Calu3 (cell line): ENCODE measurements at regions of chr2 and their contacts with region 1.

Region 1: GRCh38 chr2:83951378-83951947 is 507.6 kb downstream of the SUCLG1 start:
- DNase-seq: no peak
- H3K4me3 Mint-ChIP-seq: no peak overlapping the region
- H3K27ac Mint-ChIP-seq: peak overlapping the region; percentile 19
- H3K4me1 Mint-ChIP-seq: peaks cover 17% of the 10 kb centered on the region
- H3K27me3 Mint-ChIP-seq: no peaks in the 10 kb centered on the region
- CTCF ChIP-seq: no peak

Region 2: DNA sequence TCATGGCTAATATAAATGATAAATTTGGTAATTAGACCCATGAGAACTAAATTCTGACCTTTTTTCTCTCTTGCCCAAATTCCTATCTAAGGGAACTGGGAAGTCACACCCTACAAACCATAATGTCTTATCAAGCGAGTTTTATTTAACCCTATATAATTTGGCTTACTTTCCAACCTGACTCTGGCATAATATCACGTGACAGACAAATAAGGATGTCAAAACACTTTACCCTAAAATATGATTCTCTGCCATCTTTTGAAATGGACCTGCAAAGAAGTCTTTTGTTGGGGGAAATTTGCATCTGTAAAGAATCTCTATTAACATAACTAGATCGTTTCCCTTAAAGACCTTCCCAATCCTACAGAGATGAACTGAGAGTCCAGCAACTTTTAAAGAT is 1823.4 kb before region 1 on chr2:
- CTCF ChIA-PET with region 1: no interaction called
- intact Hi-C with region 1: no loop called
- DNase-seq: no peak
- H3K4me3 Mint-ChIP-seq: no peak overlapping the region
- H3K27ac Mint-ChIP-seq: no peak overlapping the region
- H3K4me1 Mint-ChIP-seq: peaks cover 8% of the 10 kb centered on the region
- H3K27me3 Mint-ChIP-seq: no peaks in the 10 kb centered on the region
- CTCF ChIP-seq: no peak

Region 3: GRCh38 chr2:83764447-83765005 is 186.9 kb before region 1 on chr2:
- CTCF ChIA-PET with region 1: no interaction called
- intact Hi-C with region 1: no loop called
- DNase-seq: no peak
- H3K4me3 Mint-ChIP-seq: no peak overlapping the region
- H3K27ac Mint-ChIP-seq: no peak overlapping the region
- H3K4me1 Mint-ChIP-seq: no peaks in the 10 kb centered on the region
- H3K27me3 Mint-ChIP-seq: no peaks in the 10 kb centered on the region
- CTCF ChIP-seq: no peak

Region 4: GRCh38 chr2:83900862-83901261 is 50.6 kb before region 1 on chr2:
- CTCF ChIA-PET with region 1: no interaction called
- intact Hi-C with region 1: loop called (anchors 2 kb)
- DNase-seq: peak; percentile 10
- H3K4me3 Mint-ChIP-seq: no peak overlapping the region
- H3K27ac Mint-ChIP-seq: no peak overlapping the region
- H3K4me1 Mint-ChIP-seq: peaks cover 11% of the 10 kb centered on the region
- H3K27me3 Mint-ChIP-seq: no peaks in the 10 kb centered on the region
- CTCF ChIP-seq: no peak

Region 5: DNA sequence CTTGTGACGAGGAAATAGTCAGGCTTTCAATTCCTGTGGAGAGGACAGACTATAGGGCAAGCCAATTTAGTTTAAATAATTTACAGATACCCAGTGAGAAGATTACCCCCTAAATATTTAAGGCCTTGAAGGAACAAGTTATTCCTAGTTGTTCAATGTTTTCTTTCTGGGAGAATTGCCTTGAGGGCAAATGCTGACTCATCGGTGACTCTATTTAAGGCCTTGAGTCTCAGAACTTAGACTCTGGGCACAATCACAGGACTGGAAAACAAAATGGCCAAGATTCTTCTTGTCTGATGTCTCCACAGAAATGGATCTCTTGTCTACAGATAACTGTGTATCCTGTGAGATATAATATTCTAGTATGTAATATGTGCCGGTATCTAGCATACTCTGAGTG is 40.5 kb after region 1 on chr2:
- CTCF ChIA-PET with region 1: no interaction called
- intact Hi-C with region 1: no loop called
- DNase-seq: no peak
- H3K4me3 Mint-ChIP-seq: no peak overlapping the region
- H3K27ac Mint-ChIP-seq: no peak overlapping the region
- H3K4me1 Mint-ChIP-seq: no peaks in the 10 kb centered on the region
- H3K27me3 Mint-ChIP-seq: no peaks in the 10 kb centered on the region
- CTCF ChIP-seq: no peak

Region 6: DNA sequence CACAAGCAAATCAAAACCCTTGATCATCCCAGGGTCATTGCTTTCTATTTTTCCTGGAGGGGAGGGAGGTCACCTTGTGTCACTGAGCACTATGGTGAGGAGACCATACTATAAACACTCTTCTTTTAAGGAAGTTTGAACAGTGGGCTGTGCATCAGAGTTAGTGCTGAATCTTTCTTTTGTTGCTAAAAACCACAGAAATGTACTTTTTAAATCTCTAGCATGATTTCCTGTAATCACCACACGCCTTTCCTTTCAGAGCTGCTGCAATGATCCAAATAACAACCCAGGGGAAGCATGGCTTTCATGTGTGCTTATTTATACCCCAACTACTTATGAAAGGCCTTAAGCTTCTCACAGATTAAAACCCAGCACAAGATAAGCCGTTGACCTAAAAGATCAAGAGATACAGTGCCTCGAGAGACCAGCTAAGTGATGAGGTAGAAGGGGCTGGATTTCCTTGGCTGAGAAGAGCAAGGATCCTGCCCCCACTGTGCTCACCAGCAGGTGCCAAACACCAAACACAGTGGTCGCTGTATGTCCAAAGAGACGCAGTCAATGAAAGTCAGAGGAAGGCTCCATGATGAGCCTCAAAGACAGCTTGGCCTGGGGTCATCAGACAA is 894.7 kb after region 1 on chr2:
- CTCF ChIA-PET with region 1: no interaction called
- intact Hi-C with region 1: no loop called
- DNase-seq: no peak
- H3K4me3 Mint-ChIP-seq: no peak overlapping the region
- H3K27ac Mint-ChIP-seq: no peak overlapping the region
- H3K4me1 Mint-ChIP-seq: no peaks in the 10 kb centered on the region
- H3K27me3 Mint-ChIP-seq: peaks cover 54% of the 10 kb centered on the region
- CTCF ChIP-seq: no peak